ENCODE measurements at regions of chr12 and their contacts with region 1.

Region 1: DNA sequence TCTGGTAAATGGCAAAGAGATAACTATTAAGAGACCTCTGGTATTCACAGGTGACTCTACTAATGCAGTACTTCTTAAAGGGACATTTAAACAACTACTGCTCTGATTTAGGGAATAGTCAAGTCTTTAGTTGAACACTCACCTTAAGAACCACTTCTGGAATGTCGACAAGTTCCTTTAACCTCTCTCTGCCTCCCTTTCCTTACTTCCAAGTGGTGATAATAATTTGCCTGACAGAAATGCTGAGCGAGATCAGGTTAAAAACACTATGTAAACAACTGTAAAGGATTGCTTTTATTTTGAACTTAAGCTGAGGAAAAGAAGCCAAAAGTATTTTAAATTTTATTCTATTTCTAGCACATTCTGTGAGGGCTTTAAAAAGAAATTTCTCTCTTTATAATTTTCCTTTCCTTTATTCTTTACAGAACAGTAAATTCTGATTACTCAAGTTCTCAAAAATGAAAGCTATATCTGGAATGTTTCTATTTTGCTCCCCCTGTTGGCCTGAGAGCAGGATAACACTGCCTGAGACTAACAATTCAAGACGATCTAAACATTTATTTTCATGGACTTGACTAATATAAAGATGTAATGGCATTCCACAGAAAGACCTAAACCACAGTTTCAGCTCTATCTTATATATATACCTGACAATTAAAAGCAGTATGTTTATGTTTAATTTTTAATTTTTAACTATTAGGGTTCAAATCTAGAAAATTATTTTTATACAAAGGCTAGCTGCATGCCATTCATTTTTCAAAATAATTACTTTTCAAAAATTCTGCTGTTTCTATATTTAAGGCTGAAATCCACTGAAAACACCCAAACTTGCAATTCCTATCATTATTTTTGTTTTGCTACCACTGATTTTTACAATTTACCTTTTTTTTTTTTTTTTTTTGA is 29.2 kb downstream of the ZCCHC8 start:
- DNase-seq: no peak
- H3K4me3 Mint-ChIP-seq: no peak overlapping the region
- H3K27ac Mint-ChIP-seq: no peak overlapping the region
- H3K4me1 Mint-ChIP-seq: peaks cover 21% of the 10 kb centered on the region
- H3K27me3 Mint-ChIP-seq: no peaks in the 10 kb centered on the region

Region 2: DNA sequence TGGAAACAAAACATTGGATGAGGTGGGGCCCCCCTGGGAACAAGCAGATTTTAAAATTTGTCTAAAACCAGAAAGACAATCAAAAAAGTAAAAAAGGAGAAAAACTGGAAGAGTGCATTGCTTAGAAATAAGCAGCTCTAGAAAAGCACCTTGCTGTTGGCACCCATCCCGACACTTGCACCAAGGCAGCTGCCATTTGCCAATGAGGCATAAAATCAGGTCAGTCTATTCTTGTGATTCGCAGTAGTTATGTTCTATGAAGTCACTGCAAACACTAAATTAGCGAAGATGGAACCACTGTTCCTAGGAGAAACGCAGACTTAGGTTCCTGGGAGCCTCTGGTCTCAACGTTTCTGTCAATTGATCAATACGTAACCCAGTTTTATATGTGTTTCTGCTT is 221.5 kb before region 1 on chr12:
- CTCF ChIA-PET with region 1: no interaction called
- DNase-seq: no peak
- H3K4me3 Mint-ChIP-seq: no peak overlapping the region
- H3K27ac Mint-ChIP-seq: no peak overlapping the region
- H3K4me1 Mint-ChIP-seq: peaks cover 8% of the 10 kb centered on the region
- H3K27me3 Mint-ChIP-seq: no peaks in the 10 kb centered on the region

Region 3: DNA sequence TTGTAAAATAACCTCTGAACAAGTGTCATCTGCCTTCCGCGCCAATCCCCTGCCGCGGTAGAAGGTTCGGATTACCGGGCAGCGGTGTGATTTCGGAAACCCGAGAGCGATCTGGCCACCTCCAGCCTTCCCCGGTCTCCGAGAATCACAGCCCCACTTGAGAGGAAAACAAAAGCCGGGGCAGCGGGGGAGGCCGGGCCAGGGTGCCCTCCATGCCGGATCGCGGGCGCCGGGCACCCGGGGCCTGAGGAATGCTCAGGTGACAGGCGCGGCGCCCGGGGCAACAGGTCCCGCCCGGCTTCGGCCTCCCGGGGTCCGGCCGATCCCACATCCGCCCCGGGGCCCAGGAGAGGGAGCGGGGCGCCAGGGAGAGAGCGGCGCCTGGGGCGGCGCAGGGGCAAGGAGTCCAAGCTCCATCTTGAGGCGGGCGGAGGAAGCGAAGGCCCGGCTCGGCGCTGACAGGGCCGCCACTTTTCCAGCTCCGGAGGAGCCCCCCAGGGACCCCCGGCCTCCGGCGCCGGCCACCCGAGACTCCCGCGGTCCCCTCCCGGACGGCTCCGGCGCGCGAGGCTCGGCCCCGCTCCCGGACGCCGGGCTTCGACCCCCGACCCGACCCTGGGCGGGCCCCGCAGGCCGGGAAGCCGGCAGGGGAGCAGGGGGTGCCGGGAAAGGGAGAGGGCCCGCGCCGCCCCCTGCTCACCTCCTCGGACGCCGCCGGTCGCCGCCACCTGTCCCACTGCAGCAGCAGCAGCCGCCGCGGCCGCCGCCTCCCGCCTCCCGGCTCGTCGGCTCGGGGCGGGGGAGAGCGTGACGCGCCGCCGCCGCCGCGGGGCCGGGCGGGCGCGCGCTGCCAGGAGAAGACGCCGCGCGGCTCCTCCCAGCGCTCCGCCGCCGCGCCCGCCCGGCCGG is 49.5 kb before region 1 on chr12 and contains the start of gene CLIP1:
- CTCF ChIA-PET with region 1: interaction called, 62 read pairs
- DNase-seq: peak; percentile 74
- H3K4me3 Mint-ChIP-seq: peak within 1 kb of the TSS; percentile 84
- H3K27ac Mint-ChIP-seq: peak within 1 kb of the TSS; percentile 88
- H3K4me1 Mint-ChIP-seq: peaks cover 46% of the 10 kb centered on the region
- H3K27me3 Mint-ChIP-seq: peaks cover 9% of the 10 kb centered on the region

Region 4: DNA sequence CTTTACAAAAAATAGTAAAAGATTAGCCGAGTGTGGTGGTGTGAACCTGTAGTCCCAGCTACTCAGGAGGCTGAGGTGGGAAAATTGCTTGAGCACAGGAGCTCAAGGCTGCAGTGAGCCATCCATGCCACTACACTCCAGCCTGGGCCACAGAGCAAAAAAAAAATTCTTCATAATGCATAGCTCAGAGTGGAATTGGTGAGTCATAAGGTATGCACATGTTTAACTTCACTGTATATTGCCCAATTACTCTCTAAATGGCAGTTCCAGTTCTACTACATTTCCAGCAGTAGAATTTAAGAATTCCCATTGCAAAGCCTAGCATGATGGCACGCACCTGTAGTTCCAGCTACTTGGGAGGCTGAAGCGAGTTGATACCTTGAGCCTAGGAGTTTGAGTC is 22.2 kb before region 1 on chr12:
- CTCF ChIA-PET with region 1: interaction called, 11 read pairs
- DNase-seq: no peak
- H3K4me3 Mint-ChIP-seq: no peak overlapping the region
- H3K27ac Mint-ChIP-seq: no peak overlapping the region
- H3K4me1 Mint-ChIP-seq: peaks cover 25% of the 10 kb centered on the region
- H3K27me3 Mint-ChIP-seq: no peaks in the 10 kb centered on the region